CD8-positive, alpha-beta T cell (primary cell): ENCODE measurements at regions of chr13 and their contacts with region 1.

Region 1: GRCh38 chr13:27826379-27827353 is 34.4 kb downstream of the GSX1 start:
- DNase-seq: peak; percentile 26 to 80 (median 69)
- ATAC-seq: peak; percentile 62
- H3K4me3 ChIP-seq: no peak overlapping the region
- H3K4me3 Mint-ChIP-seq: no peak overlapping the region
- H3K27ac ChIP-seq: no peak overlapping the region
- H3K27ac Mint-ChIP-seq: no peak overlapping the region
- H3K4me1 ChIP-seq: no peaks in the 10 kb centered on the region
- H3K4me1 Mint-ChIP-seq: peaks cover 10% of the 10 kb centered on the region
- H3K27me3 ChIP-seq: peaks cover 0 to 3% of the 10 kb centered on the region in 2 experiments
- H3K27me3 Mint-ChIP-seq: peaks cover 57% of the 10 kb centered on the region
- CTCF ChIP-seq: peak; percentile 78

Region 2: DNA sequence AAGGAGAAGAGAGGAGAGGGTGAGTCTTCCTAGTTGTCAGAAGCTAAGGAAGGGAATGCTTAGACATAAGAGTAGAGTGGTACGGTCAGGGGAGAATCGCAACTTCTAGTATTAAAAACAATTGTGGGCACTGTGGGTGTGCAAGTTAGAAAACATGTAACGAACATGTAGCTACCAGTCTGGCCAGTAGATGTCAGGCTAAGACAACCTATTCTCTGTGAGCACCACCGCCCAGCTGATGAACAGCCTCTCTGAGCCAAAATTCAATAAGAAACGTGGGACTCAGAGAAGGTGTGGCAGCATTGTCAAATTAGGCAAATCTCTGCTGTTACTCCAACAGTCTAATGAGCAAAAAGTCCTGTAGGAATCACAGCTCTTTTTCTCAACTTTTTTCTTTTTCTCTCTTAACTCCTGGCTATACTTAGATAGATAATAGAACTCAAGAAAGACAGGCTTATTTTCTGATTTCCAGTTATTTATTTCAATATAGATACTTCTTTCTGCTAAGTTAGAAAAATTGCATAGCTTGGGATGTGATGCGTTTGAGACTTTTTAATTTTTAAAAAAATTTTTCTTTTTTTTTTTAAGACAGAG is 841.3 kb before region 1 on chr13:
- CTCF ChIA-PET with region 1: interaction called, 32 read pairs
- POLR2A ChIA-PET with region 1: interaction called, 3 read pairs
- intact Hi-C with region 1: loop called (anchors 1 kb)
- DNase-seq: peak; percentile 43 to 85 (median 69)
- ATAC-seq: peak; percentile 96
- H3K4me3 ChIP-seq: no peak overlapping the region
- H3K4me3 Mint-ChIP-seq: no peak overlapping the region
- H3K27ac ChIP-seq: no peak overlapping the region
- H3K27ac Mint-ChIP-seq: no peak overlapping the region
- H3K4me1 ChIP-seq: no peaks in the 10 kb centered on the region
- H3K4me1 Mint-ChIP-seq: peaks cover 3% of the 10 kb centered on the region
- H3K27me3 ChIP-seq: no peaks in the 10 kb centered on the region
- H3K27me3 Mint-ChIP-seq: peaks cover 16% of the 10 kb centered on the region
- CTCF ChIP-seq: peak; percentile 87

Region 3: GRCh38 chr13:27383127-27383921 is 443.3 kb before region 1 on chr13:
- CTCF ChIA-PET with region 1: interaction called, 235 read pairs
- POLR2A ChIA-PET with region 1: no interaction called
- intact Hi-C with region 1: no loop called
- DNase-seq: no peak
- ATAC-seq: no peak
- H3K4me3 ChIP-seq: no peak overlapping the region
- H3K4me3 Mint-ChIP-seq: no peak overlapping the region
- H3K27ac ChIP-seq: no peak overlapping the region
- H3K27ac Mint-ChIP-seq: no peak overlapping the region
- H3K4me1 ChIP-seq: no peaks in the 10 kb centered on the region
- H3K4me1 Mint-ChIP-seq: no peaks in the 10 kb centered on the region
- H3K27me3 ChIP-seq: no peaks in the 10 kb centered on the region
- H3K27me3 Mint-ChIP-seq: peaks cover 6% of the 10 kb centered on the region
- CTCF ChIP-seq: no peak

Region 4: DNA sequence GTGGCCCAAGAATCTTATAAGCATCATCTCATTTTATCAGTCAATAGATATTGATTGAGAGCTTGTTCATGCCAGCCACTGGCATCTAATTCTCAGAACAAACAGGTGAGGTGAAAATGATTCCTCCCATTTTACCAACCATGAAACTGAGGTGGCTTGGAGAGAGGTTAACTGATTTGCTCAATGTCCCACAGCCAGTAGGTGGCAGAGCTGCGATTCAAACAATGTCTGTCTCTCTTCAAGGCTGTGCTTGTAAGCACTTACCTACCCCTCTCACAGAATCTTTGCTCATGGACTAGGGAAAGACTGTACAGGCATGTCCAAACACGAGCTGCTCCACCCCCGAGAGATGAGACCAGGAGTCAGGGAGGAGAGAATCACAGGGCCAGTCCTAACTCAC is 55.9 kb before region 1 on chr13:
- CTCF ChIA-PET with region 1: interaction called, 61 read pairs
- POLR2A ChIA-PET with region 1: no interaction called
- intact Hi-C with region 1: loop called (anchors 1 to 2 kb)
- DNase-seq: peak in 3 of 9 experiments; percentile 20 to 47 (median 28)
- ATAC-seq: no peak
- H3K4me3 ChIP-seq: no peak overlapping the region
- H3K4me3 Mint-ChIP-seq: no peak overlapping the region
- H3K27ac ChIP-seq: no peak overlapping the region
- H3K27ac Mint-ChIP-seq: no peak overlapping the region
- H3K4me1 ChIP-seq: no peaks in the 10 kb centered on the region
- H3K4me1 Mint-ChIP-seq: no peaks in the 10 kb centered on the region
- H3K27me3 ChIP-seq: peaks cover 0 to 5% of the 10 kb centered on the region in 2 experiments
- H3K27me3 Mint-ChIP-seq: peaks cover 49% of the 10 kb centered on the region
- CTCF ChIP-seq: no peak

Region 5: GRCh38 chr13:27806744-27807387 is 19.8 kb before region 1 on chr13:
- CTCF ChIA-PET with region 1: interaction called, 37 read pairs
- POLR2A ChIA-PET with region 1: no interaction called
- intact Hi-C with region 1: no loop called
- DNase-seq: no peak
- ATAC-seq: no peak
- H3K4me3 ChIP-seq: no peak overlapping the region
- H3K4me3 Mint-ChIP-seq: no peak overlapping the region
- H3K27ac ChIP-seq: no peak overlapping the region
- H3K27ac Mint-ChIP-seq: no peak overlapping the region
- H3K4me1 ChIP-seq: no peaks in the 10 kb centered on the region
- H3K4me1 Mint-ChIP-seq: no peaks in the 10 kb centered on the region
- H3K27me3 ChIP-seq: no peaks in the 10 kb centered on the region
- H3K27me3 Mint-ChIP-seq: peaks cover 45% of the 10 kb centered on the region
- CTCF ChIP-seq: no peak

Region 6: GRCh38 chr13:27980280-27980998 is 153.8 kb after region 1 on chr13:
- CTCF ChIA-PET with region 1: interaction called, 89 read pairs
- POLR2A ChIA-PET with region 1: no interaction called
- intact Hi-C with region 1: loop called (anchors 1 kb)
- DNase-seq: no peak
- ATAC-seq: no peak
- H3K4me3 ChIP-seq: no peak overlapping the region
- H3K4me3 Mint-ChIP-seq: no peak overlapping the region
- H3K27ac ChIP-seq: no peak overlapping the region
- H3K27ac Mint-ChIP-seq: no peak overlapping the region
- H3K4me1 ChIP-seq: no peaks in the 10 kb centered on the region
- H3K4me1 Mint-ChIP-seq: peaks cover 29% of the 10 kb centered on the region
- H3K27me3 ChIP-seq: peaks cover 6 to 24% of the 10 kb centered on the region in 2 experiments
- H3K27me3 Mint-ChIP-seq: peaks cover 64% of the 10 kb centered on the region
- CTCF ChIP-seq: no peak